Naive thymus-derived CD8-positive, alpha-beta T cell (primary cell): ENCODE measurements at regions of chr12 and their contacts with region 1.

Region 1: DNA sequence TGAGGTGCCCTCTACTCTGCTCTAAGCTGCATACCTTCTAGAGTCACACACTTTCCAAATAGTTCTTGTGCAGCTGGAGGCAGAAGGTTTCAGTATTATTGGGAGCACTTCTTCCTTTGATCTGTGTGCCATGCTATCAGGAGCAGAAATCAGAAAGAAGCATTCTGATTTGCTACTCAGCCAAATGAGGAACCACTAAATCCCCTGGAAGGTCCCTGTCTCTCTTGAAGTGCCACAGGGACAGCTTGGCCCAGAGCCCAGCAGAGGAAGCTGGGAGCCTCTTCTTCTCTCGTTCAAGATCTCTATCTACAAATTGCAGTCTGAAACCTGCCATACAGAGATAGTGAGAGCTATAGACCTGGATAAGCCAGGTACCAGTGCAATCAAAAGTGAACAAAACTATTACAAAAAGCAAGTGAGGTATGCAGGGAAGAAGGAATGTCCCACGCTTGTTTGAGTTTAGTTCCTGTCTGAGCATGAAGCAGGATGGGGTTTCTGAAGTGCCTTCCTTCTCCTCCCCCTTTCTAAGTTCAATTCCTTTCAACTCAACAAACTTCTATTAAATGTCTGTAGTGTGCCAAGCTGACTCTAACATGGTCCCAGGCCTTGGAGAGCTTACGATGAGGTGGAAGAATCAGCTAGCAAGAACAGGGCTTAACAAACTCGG is 100.9 kb upstream of the PARP11 start:
- DNase-seq: peak in 4 of 10 donors; percentile 15 to 36 (median 24)
- ATAC-seq: peak; percentile 18 to 29
- H3K4me3 Mint-ChIP-seq: peak overlapping the region; percentile 38 to 84 (median 70)
- H3K27ac Mint-ChIP-seq: peak overlapping the region; percentile 19 to 92 (median 88)
- H3K4me1 Mint-ChIP-seq: peaks cover 40 to 80% (median 75%) of the 10 kb centered on the region in 4 donors
- H3K27me3 Mint-ChIP-seq: no peaks in the 10 kb centered on the region

Region 2: GRCh38 chr12:3947781-3948180 is 26.3 kb before region 1 on chr12:
- POLR2A ChIA-PET with region 1: interaction called, 23 read pairs
- DNase-seq: peak in 4 of 10 donors; percentile 25 to 85 (median 72)
- ATAC-seq: peak; percentile 65 to 86
- H3K4me3 Mint-ChIP-seq: peak overlapping the region in 9 of 10 donors; percentile 4 to 62 (median 51)
- H3K27ac Mint-ChIP-seq: peak overlapping the region; percentile 90 to 98 (median 96)
- H3K4me1 Mint-ChIP-seq: peaks cover 34 to 68% (median 62%) of the 10 kb centered on the region in 4 donors
- H3K27me3 Mint-ChIP-seq: no peaks in the 10 kb centered on the region

Region 3: DNA sequence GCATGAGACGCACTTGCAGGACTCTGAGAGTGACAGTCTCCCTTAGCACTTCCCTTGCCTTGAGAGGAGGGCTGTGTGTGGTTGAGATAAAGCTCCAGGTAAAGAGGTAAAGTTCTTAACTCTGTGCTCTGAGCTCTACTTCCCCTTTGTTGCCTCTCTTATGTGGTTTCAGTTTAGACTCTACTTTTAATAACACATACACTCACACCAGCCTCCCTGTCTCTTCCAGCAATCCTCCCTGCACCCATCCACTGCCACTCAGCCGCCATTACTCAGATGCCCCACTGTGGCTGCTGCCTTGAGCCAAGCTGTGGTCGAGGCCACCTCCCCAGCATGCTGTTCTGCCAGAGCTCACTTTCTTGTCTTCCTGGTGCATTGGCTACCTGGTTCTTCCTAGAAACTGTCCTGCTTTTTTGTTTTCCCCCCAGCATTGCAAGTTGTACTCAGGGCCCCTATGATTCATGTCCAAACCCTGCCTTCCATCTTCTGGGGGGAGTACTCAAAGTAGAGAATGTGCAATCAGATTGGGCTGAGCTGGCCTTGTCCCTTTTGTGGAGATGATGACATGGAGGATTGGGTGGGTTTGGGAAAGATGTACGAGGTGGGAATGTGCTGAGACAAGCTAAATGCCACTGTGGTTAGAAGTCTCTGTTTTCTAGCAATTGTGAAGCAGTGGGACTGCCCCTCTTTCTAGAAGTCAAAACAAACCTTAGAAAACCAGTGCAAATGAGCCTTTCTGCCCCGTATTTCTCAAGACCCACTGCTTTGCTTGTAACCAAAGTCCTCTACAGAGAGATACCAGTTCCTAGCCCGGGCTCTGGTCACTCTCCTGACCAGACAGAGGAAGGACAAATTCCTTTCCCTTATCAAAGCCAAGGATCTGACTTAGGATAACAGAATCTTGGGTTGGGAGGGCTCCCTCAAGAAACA is 14.7 kb after region 1 on chr12:
- POLR2A ChIA-PET with region 1: interaction called, 152 read pairs
- DNase-seq: peak in 7 of 10 donors; percentile 21 to 73 (median 44)
- ATAC-seq: peak; percentile 92 to 93
- H3K4me3 Mint-ChIP-seq: peak overlapping the region; percentile 42 to 80 (median 66)
- H3K27ac Mint-ChIP-seq: peak overlapping the region; percentile 80 to 96 (median 91)
- H3K4me1 Mint-ChIP-seq: peaks cover 14 to 39% (median 33%) of the 10 kb centered on the region in 4 donors
- H3K27me3 Mint-ChIP-seq: no peaks in the 10 kb centered on the region